Common myeloid progenitor, CD34-positive (primary cell): ENCODE measurements at regions of chr5 and their contacts with region 1.

Region 1: GRCh38 chr5:126776497-126777256 is at the start of gene LMNB1:
- DNase-seq: peak; percentile 92 to 97 (median 96)
- H3K4me3 ChIP-seq: peak within 1 kb of the TSS; percentile 66 to 98 (median 95)
- H3K27ac ChIP-seq: peak within 1 kb of the TSS; percentile 46 to 86
- H3K4me1 ChIP-seq: peaks cover 11 to 39% (median 19%) of the 10 kb centered on the region in 4 experiments
- H3K27me3 ChIP-seq: no peaks in the 10 kb centered on the region

Region 2: DNA sequence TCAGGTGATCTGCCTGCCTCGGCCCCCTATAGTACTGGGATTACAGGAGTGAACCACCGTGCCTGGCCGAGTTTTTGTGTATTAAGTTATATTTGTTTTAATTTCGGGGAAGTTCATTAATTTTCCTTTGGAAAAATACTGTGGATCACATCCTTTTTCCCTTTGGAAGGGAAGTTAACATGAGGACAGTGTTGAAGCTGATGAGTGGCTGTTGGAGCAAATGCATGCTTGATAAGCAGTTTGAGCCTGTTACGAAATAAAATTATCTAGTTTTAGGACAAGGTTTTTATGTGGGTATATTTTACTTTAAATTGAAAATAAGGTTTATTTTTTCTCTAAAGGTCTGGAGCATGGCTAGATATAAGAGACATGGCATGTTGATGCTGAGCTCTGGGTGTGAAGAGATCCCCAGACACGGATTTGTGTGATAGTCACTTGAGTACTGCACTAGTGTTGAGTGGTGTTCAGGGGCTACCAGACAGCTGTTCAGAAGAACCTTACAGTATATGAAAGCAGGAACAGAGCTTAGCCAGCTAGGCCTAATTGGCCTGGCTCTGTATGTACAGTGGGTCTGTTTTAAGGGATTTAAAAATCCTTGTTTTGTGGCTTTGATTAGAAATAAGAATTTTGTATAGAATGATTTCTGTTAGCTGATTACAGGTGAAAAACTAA is 17.6 kb after region 1 on chr5:
- CTCF ChIA-PET with region 1: interaction called, 22 read pairs
- POLR2A ChIA-PET with region 1: interaction called, 3 read pairs
- DNase-seq: no peak
- H3K4me3 ChIP-seq: no peak overlapping the region
- H3K27ac ChIP-seq: no peak overlapping the region
- H3K4me1 ChIP-seq: peaks cover 0 to under 1% (median 0%) of the 10 kb centered on the region in 4 experiments
- H3K27me3 ChIP-seq: no peaks in the 10 kb centered on the region

Region 3: DNA sequence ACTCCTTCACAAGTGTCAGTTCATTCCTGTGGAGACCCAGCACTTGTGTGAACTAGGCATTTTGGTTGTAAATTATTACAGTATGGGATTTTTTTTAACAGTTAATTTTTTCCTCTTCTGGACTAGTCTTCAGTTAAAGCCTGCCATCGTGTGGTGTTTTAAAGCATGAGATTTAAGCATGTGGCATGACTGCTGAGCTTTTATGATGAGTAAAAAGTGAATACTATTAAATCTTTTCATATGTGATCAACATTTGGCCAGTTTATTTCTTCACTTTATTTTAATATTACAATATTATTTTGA is 25.3 kb after region 1 on chr5:
- CTCF ChIA-PET with region 1: interaction called, 47 read pairs
- POLR2A ChIA-PET with region 1: no interaction called
- DNase-seq: peak; percentile 69 to 84 (median 80)
- H3K4me3 ChIP-seq: no peak overlapping the region
- H3K27ac ChIP-seq: no peak overlapping the region
- H3K4me1 ChIP-seq: peaks cover under 1 to 29% (median 17%) of the 10 kb centered on the region in 4 experiments
- H3K27me3 ChIP-seq: no peaks in the 10 kb centered on the region